Activated CD4-positive, alpha-beta memory T cell treated with anti-CD3 and anti-CD28 coated beads for 36 hours (primary cell): ENCODE measurements at regions of chr4 and their contacts with region 1.

Region 1: GRCh38 chr4:174707051-174707676 is 121.9 kb downstream of the GLRA3 start:
- DNase-seq: peak; percentile 24
- H3K4me3 Mint-ChIP-seq: no peak overlapping the region
- H3K27ac Mint-ChIP-seq: no peak overlapping the region
- H3K4me1 Mint-ChIP-seq: no peaks in the 10 kb centered on the region
- H3K27me3 Mint-ChIP-seq: no peaks in the 10 kb centered on the region

Region 2: GRCh38 chr4:174358829-174359228 is 348.3 kb before region 1 on chr4:
- CTCF ChIA-PET with region 1: no interaction called
- POLR2A ChIA-PET with region 1: no interaction called
- intact Hi-C with region 1: loop called (anchors 1 kb)
- DNase-seq: no peak
- H3K4me3 Mint-ChIP-seq: no peak overlapping the region
- H3K27ac Mint-ChIP-seq: no peak overlapping the region
- H3K4me1 Mint-ChIP-seq: peaks cover 5% of the 10 kb centered on the region
- H3K27me3 Mint-ChIP-seq: peaks cover 16% of the 10 kb centered on the region

Region 3: DNA sequence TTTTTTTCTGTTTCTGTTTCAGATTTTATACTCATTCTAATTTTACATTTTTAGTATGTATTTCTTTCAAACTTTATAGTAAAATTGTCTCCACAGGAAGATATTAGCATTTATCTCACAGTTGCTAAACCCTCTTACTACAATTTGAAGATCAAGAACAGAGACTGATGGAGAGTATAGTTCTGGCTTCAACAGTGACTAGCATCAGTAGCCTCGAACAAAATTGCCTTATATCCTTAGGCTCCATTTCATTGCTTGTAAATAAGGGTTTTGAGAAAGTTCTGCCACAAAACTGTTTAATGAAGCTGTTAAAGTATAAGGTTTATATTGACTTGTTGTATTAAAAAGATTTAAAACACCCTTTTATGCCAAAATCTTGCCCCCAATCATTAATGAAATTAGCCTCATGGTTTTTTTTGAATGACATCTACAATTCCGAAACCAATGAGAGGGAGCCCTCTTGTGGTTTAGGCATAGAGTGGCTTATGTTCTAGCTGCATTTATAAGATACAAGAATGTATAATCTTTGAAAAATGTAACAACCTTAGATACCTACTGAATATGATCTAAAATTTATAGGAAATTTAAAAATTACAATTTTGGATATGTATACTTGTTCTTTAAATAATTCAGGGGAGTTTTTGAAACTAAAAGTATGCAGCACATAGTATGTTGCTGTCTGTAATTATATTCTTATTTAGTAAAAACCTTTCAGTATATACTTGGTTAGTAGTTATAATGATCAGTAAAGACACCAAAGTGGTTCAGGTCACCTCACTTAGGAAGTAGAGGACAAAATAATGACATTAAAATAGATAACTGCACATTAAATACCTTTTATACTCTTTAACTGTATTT is 75.0 kb before region 1 on chr4:
- CTCF ChIA-PET with region 1: no interaction called
- POLR2A ChIA-PET with region 1: no interaction called
- intact Hi-C with region 1: loop called (anchors 2 kb)
- DNase-seq: no peak
- H3K4me3 Mint-ChIP-seq: no peak overlapping the region
- H3K27ac Mint-ChIP-seq: no peak overlapping the region
- H3K4me1 Mint-ChIP-seq: no peaks in the 10 kb centered on the region
- H3K27me3 Mint-ChIP-seq: no peaks in the 10 kb centered on the region